Naive thymus-derived CD4-positive, alpha-beta T cell (primary cell): ENCODE measurements at regions of chr11 and their contacts with region 1.

Region 1: GRCh38 chr11:93652161-93652597 is 9.3 kb upstream of the CEP295 start:
- DNase-seq: peak in 6 of 9 donors; percentile 20 to 58 (median 37)
- ATAC-seq: no peak
- H3K4me3 ChIP-seq: no peak overlapping the region
- H3K4me3 Mint-ChIP-seq: no peak overlapping the region
- H3K27ac ChIP-seq: no peak overlapping the region
- H3K27ac Mint-ChIP-seq: no peak overlapping the region
- H3K4me1 ChIP-seq: no peaks in the 10 kb centered on the region
- H3K4me1 Mint-ChIP-seq: peaks cover 0 to 14% (median 8%) of the 10 kb centered on the region in 7 donors
- H3K27me3 ChIP-seq: no peaks in the 10 kb centered on the region
- H3K27me3 Mint-ChIP-seq: peaks cover 0 to 45% (median 4%) of the 10 kb centered on the region in 5 donors

Region 2: DNA sequence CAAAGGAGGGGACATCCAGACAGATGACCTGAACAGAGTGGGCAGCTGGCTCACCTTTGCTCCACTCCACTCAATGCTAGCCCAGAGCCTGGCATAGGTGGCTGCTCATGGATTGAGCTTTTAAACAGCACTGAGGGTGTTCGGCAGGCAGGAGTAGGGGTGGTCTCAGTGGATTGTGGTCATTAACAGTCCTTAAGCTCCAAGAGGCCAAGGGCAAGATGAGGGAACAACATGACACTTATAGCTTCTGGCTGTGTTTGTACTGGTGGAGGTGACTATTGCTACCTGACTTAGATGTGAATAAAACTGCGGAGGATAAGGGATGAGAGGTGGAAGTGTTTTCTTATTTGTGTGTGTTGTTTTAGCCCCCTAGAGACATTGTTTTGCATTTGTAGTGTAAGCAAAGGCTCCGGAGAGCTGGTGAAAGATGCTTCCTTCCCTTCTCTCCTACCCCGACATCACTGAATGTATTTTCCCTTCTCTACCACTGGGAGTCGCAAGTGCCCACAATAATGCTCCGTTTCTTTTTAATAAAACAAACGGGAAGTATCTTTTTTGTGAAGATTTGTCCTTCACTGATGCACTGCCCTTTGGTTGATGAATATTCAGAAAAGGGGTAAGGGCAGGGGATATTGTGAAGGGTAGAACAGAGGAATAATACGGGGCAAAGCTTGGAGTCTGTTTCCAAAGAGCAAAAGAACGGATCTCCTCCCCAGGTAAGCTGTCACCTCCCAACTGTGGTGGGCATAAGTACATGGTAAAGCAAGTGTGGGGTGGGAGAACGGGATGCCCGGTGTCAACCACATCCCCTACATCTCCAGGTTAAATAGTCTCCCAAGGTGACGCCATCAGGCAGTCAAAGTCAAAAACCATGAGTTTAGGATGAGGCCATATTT is 710.3 kb before region 1 on chr11:
- CTCF ChIA-PET with region 1: no interaction called
- POLR2A ChIA-PET with region 1: no interaction called
- intact Hi-C with region 1: loop called in 1 of 2 experiments (anchors 1 kb)
- DNase-seq: peak in 2 of 9 donors; percentile 6 to 9
- ATAC-seq: peak; percentile 53
- H3K4me3 ChIP-seq: no peak overlapping the region
- H3K4me3 Mint-ChIP-seq: no peak overlapping the region
- H3K27ac ChIP-seq: no peak overlapping the region
- H3K27ac Mint-ChIP-seq: no peak overlapping the region
- H3K4me1 ChIP-seq: no peaks in the 10 kb centered on the region
- H3K4me1 Mint-ChIP-seq: no peaks in the 10 kb centered on the region
- H3K27me3 ChIP-seq: no peaks in the 10 kb centered on the region
- H3K27me3 Mint-ChIP-seq: peaks cover 0 to 18% (median 9%) of the 10 kb centered on the region in 5 donors

Region 3: GRCh38 chr11:92954003-92954402 is 698.2 kb before region 1 on chr11:
- CTCF ChIA-PET with region 1: no interaction called
- POLR2A ChIA-PET with region 1: no interaction called
- intact Hi-C with region 1: loop called in 1 of 2 experiments (anchors 5 kb)
- DNase-seq: no peak
- ATAC-seq: no peak
- H3K4me3 ChIP-seq: no peak overlapping the region
- H3K4me3 Mint-ChIP-seq: no peak overlapping the region
- H3K27ac ChIP-seq: no peak overlapping the region
- H3K27ac Mint-ChIP-seq: no peak overlapping the region
- H3K4me1 ChIP-seq: no peaks in the 10 kb centered on the region
- H3K4me1 Mint-ChIP-seq: no peaks in the 10 kb centered on the region
- H3K27me3 ChIP-seq: no peaks in the 10 kb centered on the region
- H3K27me3 Mint-ChIP-seq: peaks cover 0 to 15% (median 11%) of the 10 kb centered on the region in 5 donors

Region 4: DNA sequence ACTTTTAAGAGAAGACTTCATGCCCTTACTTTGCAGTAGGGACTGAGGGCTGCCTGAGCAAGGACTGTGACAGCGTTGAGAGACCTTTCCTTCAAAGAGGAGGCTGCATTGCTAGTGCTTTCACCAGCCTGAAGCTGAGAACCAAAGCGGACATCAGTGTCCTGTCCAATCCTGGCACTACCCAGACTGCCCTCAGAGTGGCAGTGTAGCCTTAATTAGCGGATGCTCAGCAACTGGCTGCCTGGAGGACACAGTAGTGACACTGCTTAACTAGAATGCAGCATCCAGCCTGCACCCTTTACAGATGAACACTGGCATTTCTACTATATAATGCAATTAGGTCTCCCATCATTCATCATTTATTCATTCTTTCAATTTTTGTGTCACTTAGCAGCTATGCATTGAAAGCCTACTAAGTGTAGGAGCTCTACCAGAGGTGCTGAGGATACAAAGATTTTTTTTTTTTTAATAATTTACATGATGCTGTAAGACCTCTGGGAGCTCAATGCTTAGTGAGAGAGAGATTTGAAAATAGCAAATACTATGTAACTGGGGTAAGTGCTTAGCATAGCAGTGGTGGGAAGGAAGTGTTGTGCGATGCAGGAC is 417.5 kb before region 1 on chr11:
- CTCF ChIA-PET with region 1: interaction called, 19 read pairs
- POLR2A ChIA-PET with region 1: no interaction called
- intact Hi-C with region 1: loop called (anchors 1 kb)
- DNase-seq: peak; percentile 16 to 62 (median 50)
- ATAC-seq: peak; percentile 97
- H3K4me3 ChIP-seq: no peak overlapping the region
- H3K4me3 Mint-ChIP-seq: no peak overlapping the region
- H3K27ac ChIP-seq: no peak overlapping the region
- H3K27ac Mint-ChIP-seq: no peak overlapping the region
- H3K4me1 ChIP-seq: no peaks in the 10 kb centered on the region
- H3K4me1 Mint-ChIP-seq: no peaks in the 10 kb centered on the region
- H3K27me3 ChIP-seq: no peaks in the 10 kb centered on the region
- H3K27me3 Mint-ChIP-seq: peaks cover 27 to 46% (median 40%) of the 10 kb centered on the region in 5 donors

Region 5: DNA sequence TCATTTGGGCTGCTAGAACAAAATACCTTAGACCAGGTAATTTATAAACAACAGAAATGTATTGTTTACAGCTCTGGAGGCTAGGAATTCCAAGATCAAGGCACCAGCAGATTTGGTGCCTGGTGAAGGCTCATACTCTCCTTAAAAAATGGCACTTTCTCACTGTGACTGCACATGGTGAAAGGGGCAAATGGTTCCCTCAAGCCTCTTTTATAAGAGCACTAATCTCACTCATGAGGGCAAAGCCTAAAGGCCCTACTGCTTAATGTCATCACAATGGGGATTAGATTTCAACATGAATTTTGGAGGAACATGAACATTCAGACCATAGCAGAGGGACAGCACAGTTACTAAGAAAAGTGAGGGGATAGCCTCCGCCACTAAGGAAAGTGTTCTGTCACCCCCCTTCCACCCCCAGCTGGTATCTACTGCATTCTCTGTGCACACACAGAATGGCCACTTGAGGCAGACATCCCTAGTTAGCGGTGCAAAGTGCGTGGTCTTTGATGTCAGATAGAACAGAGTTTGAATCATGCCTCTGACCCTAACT is 37.9 kb before region 1 on chr11:
- CTCF ChIA-PET with region 1: interaction called, 3 read pairs
- POLR2A ChIA-PET with region 1: no interaction called
- intact Hi-C with region 1: loop called in 1 of 2 experiments (anchors 5 kb)
- DNase-seq: peak in 7 of 9 donors; percentile 3 to 56 (median 30)
- ATAC-seq: peak; percentile 55
- H3K4me3 ChIP-seq: no peak overlapping the region
- H3K4me3 Mint-ChIP-seq: no peak overlapping the region
- H3K27ac ChIP-seq: no peak overlapping the region
- H3K27ac Mint-ChIP-seq: peak overlapping the region in 1 of 9 donors; percentile 48
- H3K4me1 ChIP-seq: no peaks in the 10 kb centered on the region
- H3K4me1 Mint-ChIP-seq: peaks cover 0 to 2% (median 0%) of the 10 kb centered on the region in 7 donors
- H3K27me3 ChIP-seq: no peaks in the 10 kb centered on the region
- H3K27me3 Mint-ChIP-seq: peaks cover 0 to 8% (median 6%) of the 10 kb centered on the region in 5 donors

Region 6: GRCh38 chr11:93958991-93959390 is 306.8 kb after region 1 on chr11:
- CTCF ChIA-PET with region 1: no interaction called
- POLR2A ChIA-PET with region 1: no interaction called
- intact Hi-C with region 1: no loop called
- DNase-seq: no peak
- ATAC-seq: no peak
- H3K4me3 ChIP-seq: no peak overlapping the region
- H3K4me3 Mint-ChIP-seq: no peak overlapping the region
- H3K27ac ChIP-seq: no peak overlapping the region
- H3K27ac Mint-ChIP-seq: no peak overlapping the region
- H3K4me1 ChIP-seq: no peaks in the 10 kb centered on the region
- H3K4me1 Mint-ChIP-seq: no peaks in the 10 kb centered on the region
- H3K27me3 ChIP-seq: no peaks in the 10 kb centered on the region
- H3K27me3 Mint-ChIP-seq: peaks cover 0 to 25% (median 19%) of the 10 kb centered on the region in 5 donors